Left lung (tissue), 14 donors: ENCODE measurements at regions of chr2 and their contacts with region 1.

Region 1: DNA sequence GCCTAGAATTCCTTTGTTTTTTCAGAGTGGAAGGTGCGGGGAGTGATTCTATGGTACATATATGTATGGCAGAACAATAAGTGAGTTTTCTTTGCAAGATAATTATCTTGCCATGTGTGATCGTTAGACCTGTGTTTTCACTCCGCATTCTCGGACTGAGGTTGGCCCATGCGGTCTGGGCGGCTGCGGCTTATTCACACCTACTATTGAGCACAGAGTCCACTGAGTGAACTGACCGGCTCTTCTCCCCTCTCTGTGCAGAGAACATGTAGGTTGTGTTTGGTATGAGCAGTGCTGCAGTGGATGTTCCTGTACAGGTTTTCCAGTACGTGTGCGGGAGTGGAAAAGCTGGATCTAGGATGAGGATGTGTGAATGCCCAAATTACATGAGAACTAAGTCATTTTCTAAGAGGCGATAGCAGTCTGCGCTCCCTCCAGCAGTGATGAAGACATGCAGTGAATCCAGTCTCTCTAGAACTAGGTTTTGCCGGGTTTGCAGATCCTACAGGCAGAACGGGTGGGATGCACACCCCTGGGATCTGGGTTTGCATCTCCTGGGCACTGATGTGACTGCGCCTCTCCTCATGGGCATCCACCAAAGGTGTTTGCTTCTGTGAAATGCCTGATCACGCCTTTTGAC is 27.1 kb downstream of the MTERF4 start:
- DNase-seq: no peak
- ATAC-seq: no peak
- H3K4me3 ChIP-seq: no peak overlapping the region
- H3K27ac ChIP-seq: no peak overlapping the region
- H3K4me1 ChIP-seq: peaks cover 0 to 5% of the 10 kb centered on the region in 2 donors
- H3K27me3 ChIP-seq: no peaks in the 10 kb centered on the region
- CTCF ChIP-seq: no peak

Region 2: GRCh38 chr2:240851078-240851991 is 223.7 kb before region 1 on chr2:
- intact Hi-C with region 1: loop called in 1 of 2 experiments (anchors 5 kb)
- DNase-seq: peak; percentile 71 to 90 (median 80)
- ATAC-seq: peak; percentile 97
- H3K4me3 ChIP-seq: no peak overlapping the region
- H3K27ac ChIP-seq: no peak overlapping the region
- H3K4me1 ChIP-seq: no peaks in the 10 kb centered on the region
- H3K27me3 ChIP-seq: no peaks in the 10 kb centered on the region
- CTCF ChIP-seq: peak; percentile 97 to 98